CD4-positive, alpha-beta memory T cell (primary cell): ENCODE measurements at regions of chr15 and their contacts with region 1.

Region 1: GRCh38 chr15:66386204-66387123 is at the start of gene MAP2K1:
- DNase-seq: peak; percentile 97 to 98 (median 98)
- H3K4me3 ChIP-seq: peak within 1 kb of the TSS; percentile 71 to 96
- H3K4me3 Mint-ChIP-seq: peak within 1 kb of the TSS; percentile 95 to 100 (median 98)
- H3K27ac ChIP-seq: peak within 1 kb of the TSS; percentile 83
- H3K27ac Mint-ChIP-seq: peak within 1 kb of the TSS; percentile 78 to 100 (median 99)
- H3K4me1 ChIP-seq: peaks cover 38% of the 10 kb centered on the region
- H3K4me1 Mint-ChIP-seq: peaks cover 38 to 58% (median 48%) of the 10 kb centered on the region in 4 donors
- H3K27me3 ChIP-seq: no peaks in the 10 kb centered on the region
- H3K27me3 Mint-ChIP-seq: no peaks in the 10 kb centered on the region
- total RNA-seq, gene MAP2K1: 54.0 to 54.9 TPM

Region 2: GRCh38 chr15:66293419-66294156 is 92.9 kb before region 1 on chr15 and contains the start of gene DIS3L:
- CTCF ChIA-PET with region 1: interaction called, 4 read pairs
- POLR2A ChIA-PET with region 1: interaction called, 28 read pairs
- intact Hi-C with region 1: loop called (anchors 5 kb)
- DNase-seq: peak; percentile 65 to 78 (median 72)
- H3K4me3 ChIP-seq: peak within 1 kb of the TSS; percentile 57 to 91
- H3K4me3 Mint-ChIP-seq: peak within 1 kb of the TSS; percentile 85 to 93 (median 90)
- H3K27ac ChIP-seq: peak within 1 kb of the TSS; percentile 91
- H3K27ac Mint-ChIP-seq: peak within 1 kb of the TSS; percentile 93 to 96 (median 95)
- H3K4me1 ChIP-seq: peaks cover 50% of the 10 kb centered on the region
- H3K4me1 Mint-ChIP-seq: peaks cover 26 to 50% (median 41%) of the 10 kb centered on the region in 4 donors
- H3K27me3 ChIP-seq: no peaks in the 10 kb centered on the region
- H3K27me3 Mint-ChIP-seq: no peaks in the 10 kb centered on the region
- total RNA-seq, gene DIS3L: 36.8 to 40.3 TPM

Region 3: DNA sequence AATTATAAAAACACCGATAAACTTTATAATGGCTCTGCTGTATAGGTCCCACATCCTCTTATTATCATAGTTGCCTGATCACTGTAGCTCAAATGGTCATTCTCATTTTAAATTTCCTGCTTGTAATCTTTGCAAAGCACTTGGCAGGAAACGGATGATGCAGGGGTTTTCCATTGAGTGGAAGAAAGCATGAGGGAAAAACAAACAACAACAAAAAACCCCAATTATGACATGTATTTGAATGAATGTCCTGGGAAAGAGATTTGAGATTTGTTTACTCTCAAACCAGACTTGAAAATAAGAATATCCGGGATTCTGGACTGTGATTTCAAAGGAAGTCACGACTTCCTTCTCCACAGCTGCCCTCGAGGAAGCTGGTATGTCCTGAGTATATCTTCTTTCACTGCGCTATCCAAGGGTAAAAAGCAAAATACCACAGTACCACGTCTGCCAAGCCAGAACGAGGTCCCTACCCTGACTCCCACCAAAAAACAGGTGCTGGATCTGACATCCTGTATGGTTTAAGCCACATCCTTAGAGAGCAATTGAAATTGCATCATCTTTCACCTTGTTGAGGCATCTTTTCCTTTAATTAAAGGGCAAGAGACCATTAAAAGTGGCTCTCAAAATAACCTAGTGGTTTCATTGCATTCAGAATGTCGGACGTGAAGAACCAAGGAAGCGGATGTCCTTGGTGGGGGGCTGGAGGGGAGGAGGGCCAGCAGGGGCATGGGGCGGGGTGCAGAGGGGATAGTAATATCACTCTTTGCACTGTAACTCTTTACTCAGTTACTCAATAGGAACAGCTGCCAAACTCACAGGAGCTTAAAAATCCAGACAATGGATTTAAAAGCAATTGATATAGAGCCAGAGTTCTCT is 16.5 kb before region 1 on chr15:
- CTCF ChIA-PET with region 1: interaction called, 14 read pairs
- POLR2A ChIA-PET with region 1: interaction called, 28 read pairs
- intact Hi-C with region 1: no loop called
- DNase-seq: peak in 4 of 5 donors; percentile 12 to 48 (median 36)
- H3K4me3 ChIP-seq: peak overlapping the region; percentile 2 to 34
- H3K4me3 Mint-ChIP-seq: peak overlapping the region; percentile 13 to 90 (median 84)
- H3K27ac ChIP-seq: peak overlapping the region; percentile 63
- H3K27ac Mint-ChIP-seq: peak overlapping the region; percentile 38 to 95 (median 90)
- H3K4me1 ChIP-seq: peaks cover 11% of the 10 kb centered on the region
- H3K4me1 Mint-ChIP-seq: peaks cover 9 to 20% (median 13%) of the 10 kb centered on the region in 4 donors
- H3K27me3 ChIP-seq: no peaks in the 10 kb centered on the region
- H3K27me3 Mint-ChIP-seq: no peaks in the 10 kb centered on the region

Region 4: DNA sequence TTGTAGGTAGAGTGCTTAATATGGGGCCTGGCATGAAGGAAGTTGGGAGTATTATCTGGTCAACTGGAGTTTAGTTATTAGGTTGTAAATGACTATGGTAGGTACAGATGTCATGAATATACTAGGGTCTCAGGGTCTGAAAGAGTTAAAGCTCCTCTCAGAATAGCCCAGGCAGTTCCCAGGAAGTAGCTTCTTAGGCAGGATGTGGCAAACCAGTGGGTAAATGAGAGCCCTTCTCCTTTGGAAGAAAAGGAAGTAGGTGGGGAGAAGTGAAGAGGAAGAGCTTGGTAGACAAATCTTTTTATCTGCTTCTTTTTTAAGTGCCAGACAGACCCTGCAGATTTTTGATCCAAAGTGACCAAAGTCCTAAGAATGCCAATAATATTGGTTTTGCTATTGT is 24.7 kb after region 1 on chr15:
- CTCF ChIA-PET with region 1: interaction called, 15 read pairs
- POLR2A ChIA-PET with region 1: interaction called, 12 read pairs
- intact Hi-C with region 1: no loop called
- DNase-seq: no peak
- H3K4me3 ChIP-seq: no peak overlapping the region
- H3K4me3 Mint-ChIP-seq: peak overlapping the region; percentile 64 to 88 (median 80)
- H3K27ac ChIP-seq: no peak overlapping the region
- H3K27ac Mint-ChIP-seq: peak overlapping the region; percentile 36 to 92 (median 59)
- H3K4me1 ChIP-seq: peaks cover 67% of the 10 kb centered on the region
- H3K4me1 Mint-ChIP-seq: peaks cover 69 to 97% (median 82%) of the 10 kb centered on the region in 4 donors
- H3K27me3 ChIP-seq: no peaks in the 10 kb centered on the region
- H3K27me3 Mint-ChIP-seq: no peaks in the 10 kb centered on the region

Region 5: GRCh38 chr15:66472176-66472999 is 85.9 kb after region 1 on chr15:
- CTCF ChIA-PET with region 1: interaction called, 17 read pairs
- POLR2A ChIA-PET with region 1: interaction called, 23 read pairs
- intact Hi-C with region 1: no loop called
- DNase-seq: peak; percentile 64 to 79 (median 70)
- H3K4me3 ChIP-seq: no peak overlapping the region
- H3K4me3 Mint-ChIP-seq: peak overlapping the region; percentile 44 to 86 (median 76)
- H3K27ac ChIP-seq: peak overlapping the region; percentile 45
- H3K27ac Mint-ChIP-seq: peak overlapping the region; percentile 83 to 97 (median 90)
- H3K4me1 ChIP-seq: peaks cover 32% of the 10 kb centered on the region
- H3K4me1 Mint-ChIP-seq: peaks cover 27 to 55% (median 41%) of the 10 kb centered on the region in 4 donors
- H3K27me3 ChIP-seq: no peaks in the 10 kb centered on the region
- H3K27me3 Mint-ChIP-seq: no peaks in the 10 kb centered on the region

Region 6: DNA sequence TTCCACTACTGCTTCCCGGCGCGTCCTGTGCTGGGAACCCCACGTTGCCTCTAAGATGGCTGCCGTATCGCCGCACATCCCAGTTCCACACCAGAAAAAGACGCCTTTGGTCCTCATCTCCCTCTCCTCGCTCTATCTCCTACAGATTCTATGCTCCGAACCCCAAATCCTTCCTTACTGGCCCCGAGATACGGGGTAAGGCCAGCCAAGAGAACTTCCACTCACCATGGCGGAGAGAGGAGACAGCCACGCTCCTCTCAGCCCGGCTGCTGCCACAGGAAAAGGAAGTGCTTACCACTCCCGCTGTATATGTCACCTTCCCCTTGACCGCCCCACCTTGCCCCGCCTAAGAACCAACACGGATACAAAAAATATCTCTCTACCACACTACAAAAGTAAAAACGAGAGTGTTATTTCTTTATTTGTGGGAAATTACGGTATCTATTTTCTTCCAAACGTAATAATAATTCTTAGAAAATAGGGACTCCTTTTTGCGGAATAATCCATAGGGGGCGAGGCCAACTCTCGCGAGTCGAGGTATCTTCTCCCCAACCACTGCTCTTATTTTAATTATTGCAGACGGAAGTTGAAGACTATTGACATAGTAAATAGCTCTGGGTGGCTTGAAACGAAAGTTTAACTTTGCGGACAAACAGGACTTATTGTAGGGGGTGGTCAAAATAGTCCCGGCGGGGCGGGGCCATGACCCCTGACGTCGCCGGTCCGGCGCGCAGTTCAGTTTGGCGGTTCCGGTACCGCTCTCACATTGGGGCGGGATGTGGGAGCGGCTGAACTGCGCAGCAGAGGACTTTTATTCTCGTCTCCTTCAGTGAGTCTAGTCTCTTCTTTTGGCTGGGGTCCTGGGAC is 118.3 kb after region 1 on chr15 and contains the starts of genes RPL4 and ZWILCH:
- CTCF ChIA-PET with region 1: interaction called, 119 read pairs
- POLR2A ChIA-PET with region 1: interaction called, 119 read pairs
- intact Hi-C with region 1: loop called (anchors 1 kb)
- DNase-seq: peak; percentile 85 to 89 (median 88)
- H3K4me3 ChIP-seq: peak within 1 kb of the TSS; percentile 86 to 97
- H3K4me3 Mint-ChIP-seq: peak within 1 kb of the TSS; percentile 98 to 100 (median 100)
- H3K27ac ChIP-seq: peak within 1 kb of the TSS; percentile 89
- H3K27ac Mint-ChIP-seq: peak within 1 kb of the TSS; percentile 96 to 100 (median 99)
- H3K4me1 ChIP-seq: peaks cover 35% of the 10 kb centered on the region
- H3K4me1 Mint-ChIP-seq: peaks cover 31 to 67% (median 41%) of the 10 kb centered on the region in 4 donors
- H3K27me3 ChIP-seq: no peaks in the 10 kb centered on the region
- H3K27me3 Mint-ChIP-seq: no peaks in the 10 kb centered on the region
- total RNA-seq, gene RPL4: 3,820 to 4,004 TPM
- total RNA-seq, gene ZWILCH: 5.1 to 6.5 TPM

Region 7: DNA sequence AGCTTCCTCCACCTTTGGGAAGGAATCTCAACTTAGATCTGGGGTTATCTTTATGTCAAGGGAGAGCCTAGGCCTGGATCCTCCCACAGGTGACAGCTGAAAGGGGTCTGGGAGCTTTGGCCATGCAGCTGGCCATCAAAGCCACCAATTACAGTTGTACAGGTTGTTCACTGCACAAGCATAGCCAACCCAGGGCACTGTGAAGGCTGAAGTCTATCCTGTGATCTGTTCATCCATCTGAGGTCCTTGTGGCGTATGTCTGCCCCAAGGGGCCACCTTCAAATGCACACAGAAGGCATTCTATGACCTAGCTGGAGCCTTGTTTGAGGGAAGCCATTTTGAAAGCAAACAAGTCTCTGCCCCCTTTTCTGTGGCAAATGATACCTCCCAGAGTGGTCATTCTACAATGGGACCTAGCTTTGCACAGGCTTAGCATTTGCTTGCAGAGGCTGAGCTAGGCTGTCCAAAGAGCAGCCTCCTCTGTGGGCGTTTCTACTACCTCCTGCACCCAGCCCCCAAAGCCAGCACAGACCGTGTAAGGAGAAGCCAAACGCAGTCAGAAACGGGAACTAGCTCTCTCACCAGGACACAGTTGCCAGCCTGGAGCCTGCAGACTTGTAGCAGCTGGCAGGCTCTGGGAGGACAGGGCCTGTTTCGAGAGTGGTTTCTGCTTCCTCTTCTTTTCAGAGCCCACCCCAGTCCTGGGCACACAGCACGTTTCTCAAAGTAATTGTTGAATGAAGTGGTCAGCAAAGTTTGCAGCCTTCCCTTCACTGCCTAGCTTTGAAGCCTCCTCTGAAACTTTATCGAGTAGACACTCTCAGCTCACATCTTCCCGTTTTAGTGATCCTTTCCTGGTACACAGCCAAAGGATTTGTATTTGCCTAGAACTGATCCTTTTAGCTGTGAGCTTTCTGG is 521.6 kb after region 1 on chr15:
- CTCF ChIA-PET with region 1: no interaction called
- POLR2A ChIA-PET with region 1: no interaction called
- intact Hi-C with region 1: no loop called
- DNase-seq: no peak
- H3K4me3 ChIP-seq: no peak overlapping the region
- H3K4me3 Mint-ChIP-seq: no peak overlapping the region
- H3K27ac ChIP-seq: no peak overlapping the region
- H3K27ac Mint-ChIP-seq: no peak overlapping the region
- H3K4me1 ChIP-seq: peaks cover 19% of the 10 kb centered on the region
- H3K4me1 Mint-ChIP-seq: peaks cover 11 to 29% (median 17%) of the 10 kb centered on the region in 4 donors
- H3K27me3 ChIP-seq: no peaks in the 10 kb centered on the region
- H3K27me3 Mint-ChIP-seq: peaks cover 3 to 6% of the 10 kb centered on the region in 2 donors